IMR-90 (cell line): ENCODE measurements at regions of chr14 and their contacts with region 1.

Region 1: DNA sequence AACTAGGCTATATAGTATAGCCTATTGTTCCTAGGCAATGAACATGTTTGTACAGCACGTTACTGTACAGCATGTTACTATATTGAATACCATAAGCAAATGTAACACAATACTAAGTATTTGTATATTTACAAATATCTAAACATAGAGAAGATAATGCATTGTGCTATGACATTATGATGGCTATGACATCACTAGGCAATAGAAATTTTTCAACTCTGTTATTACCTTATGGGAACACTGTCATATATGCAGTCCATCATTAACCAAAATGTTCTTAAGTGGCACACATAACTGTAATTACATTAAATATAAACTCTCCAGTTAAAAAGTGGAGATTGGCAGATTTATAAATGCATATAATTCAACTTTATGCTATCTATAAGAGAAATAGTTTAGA is 339.9 kb downstream of the CEP128 start:
- DNase-seq: no peak
- ATAC-seq: no peak
- H3K4me3 ChIP-seq: no peak overlapping the region
- H3K27ac ChIP-seq: no peak overlapping the region
- H3K4me1 ChIP-seq: no peaks in the 10 kb centered on the region
- H3K27me3 ChIP-seq: no peaks in the 10 kb centered on the region
- CTCF ChIP-seq: no peak
- POLR2A ChIP-seq: no peak
- RAD21 ChIP-seq: no peak

Region 2: DNA sequence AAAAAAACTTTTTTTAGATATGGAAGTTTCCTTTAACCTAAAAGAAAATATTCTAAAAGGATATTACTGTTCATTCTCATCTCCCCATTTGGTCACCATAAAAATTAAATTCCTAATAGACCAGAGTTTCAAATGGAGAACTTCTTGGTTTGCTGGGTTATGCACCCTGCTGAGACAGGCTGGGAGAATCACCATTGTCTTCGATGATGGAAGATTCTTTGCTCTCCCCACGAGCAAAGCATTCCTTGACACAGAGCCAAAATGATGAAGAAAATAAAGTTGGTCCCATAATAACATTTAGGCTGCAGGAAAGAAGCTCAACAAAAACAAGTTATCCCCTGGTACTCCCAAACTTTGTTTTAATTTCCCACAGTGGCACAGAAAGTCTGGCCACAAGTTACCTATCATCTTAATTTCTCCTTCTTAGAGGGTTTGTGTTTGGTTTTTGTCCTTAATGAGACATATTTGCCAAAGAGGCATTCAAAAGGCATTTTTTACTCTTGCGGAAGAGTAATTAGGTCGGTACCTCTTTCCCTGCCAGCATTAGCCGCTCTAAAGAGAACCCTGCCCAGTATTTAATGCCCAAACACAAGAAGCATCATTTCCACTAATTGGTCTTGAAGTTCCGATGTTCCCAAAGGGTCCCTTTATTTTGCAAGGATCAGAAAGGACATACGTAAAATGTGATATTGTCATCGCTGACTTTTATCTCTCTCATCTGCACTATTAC is 395.1 kb before region 1 on chr14:
- CTCF ChIA-PET with region 1: no interaction called
- POLR2A ChIA-PET with region 1: interaction called, 25 read pairs
- dilution Hi-C with region 1: no loop called
- in situ Hi-C with region 1: no loop called
- intact Hi-C with region 1: no loop called
- DNase-seq: no peak
- ATAC-seq: no peak
- H3K4me3 ChIP-seq: no peak overlapping the region
- H3K27ac ChIP-seq: no peak overlapping the region
- H3K4me1 ChIP-seq: peaks cover 1% of the 10 kb centered on the region; the same call in 1 of the 2 replicates
- H3K27me3 ChIP-seq: no peaks in the 10 kb centered on the region
- CTCF ChIP-seq: no peak
- POLR2A ChIP-seq: no peak
- RAD21 ChIP-seq: no peak